ENCODE measurements at regions of chr3 and their contacts with region 1.

Region 1: DNA sequence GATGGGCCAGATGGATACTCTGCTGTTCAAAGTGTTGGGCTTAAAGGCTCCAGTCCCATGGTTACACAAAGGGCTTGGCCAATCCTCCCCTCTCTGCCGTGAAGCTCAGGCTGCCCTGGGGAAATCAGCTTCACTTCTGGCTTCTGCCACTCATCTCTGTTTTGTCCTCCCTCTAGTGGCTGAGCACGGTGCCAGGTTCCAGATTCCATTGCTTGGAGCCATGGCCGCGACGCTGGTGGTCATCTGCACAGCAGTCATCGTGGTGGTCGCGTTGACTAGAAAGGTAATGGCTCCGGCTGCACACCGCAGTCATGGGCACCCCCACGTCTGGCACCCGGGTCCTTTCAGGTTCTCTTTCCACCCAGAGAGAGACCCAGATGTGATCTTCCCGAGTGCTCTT is 5.6 kb downstream of the TIGIT start:
- DNase-seq: no peak
- ATAC-seq: peak; percentile 53

Region 2: GRCh38 chr3:113953677-113954076 is 345.7 kb before region 1 on chr3:
- intact Hi-C with region 1: no loop called
- DNase-seq: no peak
- ATAC-seq: no peak

Region 3: DNA sequence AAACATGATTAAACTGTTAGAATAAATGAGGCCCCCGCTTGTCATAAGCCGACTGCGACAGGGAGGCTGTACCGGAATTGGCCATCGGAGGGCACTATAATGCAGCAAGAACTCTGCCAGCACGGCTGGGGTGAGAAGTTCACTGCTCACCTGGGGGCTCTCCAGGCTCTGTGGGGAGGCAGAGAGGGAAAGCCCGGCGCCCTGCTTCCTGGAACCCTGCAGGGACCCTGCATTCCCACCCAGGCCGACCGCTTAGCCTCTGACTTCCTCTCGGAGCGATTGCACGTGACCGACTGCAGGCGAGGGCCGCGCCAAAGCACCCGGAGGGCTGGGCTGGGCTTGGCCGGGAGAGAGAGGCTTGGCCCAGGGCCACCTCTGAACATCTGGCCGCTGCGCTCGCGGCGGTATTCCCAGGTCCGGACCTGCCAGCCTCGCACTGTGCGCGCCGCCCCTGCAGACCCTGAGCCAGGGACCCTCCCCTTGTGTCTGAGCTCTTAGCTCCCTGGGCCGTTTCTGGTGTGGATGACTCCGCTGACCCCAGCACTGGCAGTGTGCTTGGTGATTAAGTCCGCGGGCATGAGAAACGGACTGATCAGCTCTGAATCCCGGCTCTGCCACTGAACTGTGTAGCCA is 146.8 kb before region 1 on chr3:
- intact Hi-C with region 1: loop called (anchors 5 kb)
- DNase-seq: peak; percentile 88
- ATAC-seq: peak; percentile 97

Region 4: DNA sequence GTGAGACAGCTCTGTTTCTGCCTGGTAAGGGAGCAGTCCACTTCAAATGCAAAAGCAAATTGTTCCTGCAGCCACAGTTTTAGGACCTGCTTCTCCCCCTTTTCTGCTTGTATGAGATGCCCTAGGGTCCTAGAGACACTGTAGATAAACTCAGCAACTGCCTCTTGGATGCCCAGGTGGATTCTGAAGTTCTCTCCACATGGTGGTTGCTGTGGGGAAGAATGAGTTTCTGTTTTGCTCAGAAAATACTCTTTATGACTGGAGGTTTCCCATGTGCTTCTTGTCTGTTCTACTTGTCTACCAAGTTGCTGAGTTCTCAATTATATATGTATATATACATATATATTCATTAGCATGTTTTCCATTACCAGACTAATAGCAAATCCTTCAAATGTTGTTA is 56.5 kb before region 1 on chr3:
- intact Hi-C with region 1: no loop called
- DNase-seq: no peak
- ATAC-seq: no peak